PC-9 (cell line): ENCODE measurements at regions of chr2 and their contacts with region 1.

Region 1: DNA sequence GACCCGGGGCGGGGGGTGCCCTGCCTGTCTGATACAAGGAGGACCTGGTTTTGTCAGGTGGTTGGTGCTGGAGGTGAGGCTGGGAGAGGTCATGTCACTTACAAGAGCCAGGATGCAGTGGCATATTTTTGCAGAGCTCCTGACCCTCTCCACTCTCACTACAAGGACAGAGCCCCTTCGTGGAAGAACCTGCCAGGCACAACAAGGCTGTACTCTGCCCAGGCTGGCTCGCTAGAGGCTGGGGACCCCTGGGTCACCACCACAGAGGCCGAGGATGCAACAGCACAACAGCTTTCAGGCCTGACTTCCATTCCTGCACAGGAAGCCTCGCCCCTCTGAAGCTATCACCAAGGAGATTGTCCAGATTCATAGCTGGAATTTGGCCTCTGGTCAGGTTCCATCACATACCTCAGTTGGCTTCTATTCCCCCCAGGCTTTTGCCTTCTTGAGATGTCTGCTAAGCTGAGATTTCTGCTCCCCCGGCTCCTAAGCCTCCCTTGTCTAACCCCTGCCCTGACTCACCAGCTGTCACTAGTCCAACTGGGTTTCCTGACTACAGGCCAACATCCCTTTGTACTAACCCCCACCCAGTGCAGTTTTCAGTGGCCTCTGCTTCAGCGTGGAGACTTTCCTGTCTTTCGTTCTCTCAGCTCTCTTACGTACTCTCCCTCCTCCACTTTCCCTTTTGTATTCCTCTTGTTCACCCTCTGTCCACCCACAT is 132.5 kb upstream of the EPAS1 start:
- DNase-seq: peak; percentile 93 to 99
- H3K4me3 ChIP-seq: peak overlapping the region; percentile 36; the same call in 1 of the 2 replicates
- H3K27ac ChIP-seq: peak overlapping the region; percentile 96
- H3K4me1 ChIP-seq: peaks cover 74% of the 10 kb centered on the region
- H3K27me3 ChIP-seq: no peaks in the 10 kb centered on the region
- CTCF ChIP-seq: 0 out of 2 replicates have a peak, but pooled peaks have one; percentile 13

Region 2: GRCh38 chr2:46010925-46011490 is 153.7 kb before region 1 on chr2:
- CTCF ChIA-PET with region 1: interaction called, 12 read pairs
- POLR2A ChIA-PET with region 1: interaction called, 4 read pairs
- intact Hi-C with region 1: no loop called
- DNase-seq: peak in 1 of 2 experiments; percentile 62
- H3K4me3 ChIP-seq: no peak overlapping the region
- H3K27ac ChIP-seq: no peak overlapping the region
- H3K4me1 ChIP-seq: peaks cover 18% of the 10 kb centered on the region
- H3K27me3 ChIP-seq: no peaks in the 10 kb centered on the region
- CTCF ChIP-seq: peak; percentile 95

Region 3: GRCh38 chr2:46067851-46068305 is 96.9 kb before region 1 on chr2:
- CTCF ChIA-PET with region 1: interaction called, 17 read pairs
- POLR2A ChIA-PET with region 1: interaction called, 3 read pairs
- intact Hi-C with region 1: loop called (anchors 1 kb)
- DNase-seq: peak; percentile 60 to 98
- H3K4me3 ChIP-seq: peak overlapping the region; percentile 27
- H3K27ac ChIP-seq: peak overlapping the region; percentile 89
- H3K4me1 ChIP-seq: peaks cover 80% of the 10 kb centered on the region
- H3K27me3 ChIP-seq: no peaks in the 10 kb centered on the region
- CTCF ChIP-seq: no peak

Region 4: DNA sequence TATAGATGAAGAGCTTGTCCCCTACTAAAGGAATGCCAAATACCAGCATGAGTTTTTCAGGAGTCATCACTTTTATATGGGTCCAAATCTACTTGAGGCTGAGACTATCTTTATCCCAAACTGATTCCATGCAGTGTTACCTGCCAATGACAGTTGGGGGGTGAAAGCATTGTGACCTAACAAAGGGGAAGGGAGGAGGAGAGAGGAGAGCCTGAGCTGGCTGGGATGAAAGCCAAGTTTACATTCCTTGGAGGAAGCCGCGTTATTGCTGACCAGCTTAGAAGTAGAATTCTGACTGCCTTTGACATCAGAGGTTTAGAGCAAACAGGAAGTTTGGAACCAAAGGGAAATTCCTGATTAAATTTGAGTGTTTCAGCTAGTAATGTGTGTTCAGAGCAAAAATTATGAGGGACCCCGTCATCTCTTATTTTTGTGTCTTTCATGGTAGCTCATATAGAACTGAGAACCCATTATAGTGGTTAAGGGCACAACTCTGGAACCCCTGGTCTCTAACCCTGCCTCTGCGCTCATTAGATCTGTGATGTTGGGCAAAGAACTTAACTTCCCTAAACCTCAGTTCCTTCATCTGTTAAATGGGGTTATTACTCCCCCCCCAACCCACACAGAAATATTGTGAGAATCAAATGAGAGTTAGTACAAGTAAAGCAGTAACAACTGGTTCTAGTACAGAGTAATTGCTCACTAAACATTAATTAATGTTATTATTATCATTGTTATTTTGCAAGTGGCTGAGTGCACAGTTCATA is 66.8 kb before region 1 on chr2:
- CTCF ChIA-PET with region 1: no interaction called
- POLR2A ChIA-PET with region 1: no interaction called
- intact Hi-C with region 1: loop called (anchors 1 kb)
- DNase-seq: peak; percentile 79 to 95
- H3K4me3 ChIP-seq: 0 out of 2 replicates have a peak overlapping the region, but pooled peaks have one; percentile 7
- H3K27ac ChIP-seq: peak overlapping the region; percentile 93
- H3K4me1 ChIP-seq: peaks cover 26% of the 10 kb centered on the region
- H3K27me3 ChIP-seq: no peaks in the 10 kb centered on the region
- CTCF ChIP-seq: no peak

Region 5: GRCh38 chr2:46179037-46179652 is 14.4 kb after region 1 on chr2:
- CTCF ChIA-PET with region 1: no interaction called
- POLR2A ChIA-PET with region 1: interaction called, 10 read pairs
- intact Hi-C with region 1: loop called (anchors 1 kb)
- DNase-seq: peak; percentile 82 to 99
- H3K4me3 ChIP-seq: no peak overlapping the region; the same call in 1 of the 2 replicates
- H3K27ac ChIP-seq: peak overlapping the region; percentile 94
- H3K4me1 ChIP-seq: peaks cover 58% of the 10 kb centered on the region
- H3K27me3 ChIP-seq: no peaks in the 10 kb centered on the region
- CTCF ChIP-seq: no peak; the same call in 1 of the 2 replicates

Region 6: DNA sequence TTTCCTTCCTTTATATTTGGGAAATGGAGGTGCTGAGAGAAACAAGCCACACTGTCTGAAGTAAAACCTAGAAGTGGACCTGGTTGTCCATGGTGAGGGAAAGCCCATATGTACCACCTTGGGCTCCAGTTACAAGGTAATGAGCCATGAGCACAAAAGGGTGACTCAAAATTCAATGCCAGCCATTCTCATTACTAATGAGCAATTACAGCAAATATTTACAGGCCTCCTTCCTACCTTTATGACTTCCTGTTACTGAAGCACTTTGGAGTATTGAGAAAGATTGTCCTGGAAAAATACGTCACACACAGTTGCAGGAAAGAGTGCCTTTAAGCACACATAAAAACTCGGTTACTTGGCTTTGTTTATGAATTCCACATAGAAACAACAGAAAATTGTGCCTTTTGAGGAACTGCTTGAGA is 141.6 kb after region 1 on chr2:
- CTCF ChIA-PET with region 1: interaction called, 10 read pairs
- POLR2A ChIA-PET with region 1: no interaction called
- intact Hi-C with region 1: no loop called
- DNase-seq: peak; percentile 40 to 100
- H3K4me3 ChIP-seq: peak overlapping the region; percentile 43; the same call in 1 of the 2 replicates
- H3K27ac ChIP-seq: peak overlapping the region; percentile 87
- H3K4me1 ChIP-seq: peaks cover 98% of the 10 kb centered on the region
- H3K27me3 ChIP-seq: no peaks in the 10 kb centered on the region
- CTCF ChIP-seq: no peak

Region 7: GRCh38 chr2:46335391-46336282 is 170.9 kb after region 1 on chr2:
- CTCF ChIA-PET with region 1: no interaction called
- POLR2A ChIA-PET with region 1: no interaction called
- intact Hi-C with region 1: no loop called
- DNase-seq: peak in 1 of 2 experiments; percentile 63
- H3K4me3 ChIP-seq: no peak overlapping the region
- H3K27ac ChIP-seq: no peak overlapping the region
- H3K4me1 ChIP-seq: peaks cover 39% of the 10 kb centered on the region
- H3K27me3 ChIP-seq: no peaks in the 10 kb centered on the region
- CTCF ChIP-seq: no peak